GM12878 (cell line): ENCODE measurements at regions of chr12 and their contacts with region 1.

Region 1: GRCh38 chr12:108691175-108691997 is 39.9 kb downstream of the CORO1C start:
- DNase-seq: peak; percentile 63
- ATAC-seq: peak; percentile 90
- H3K4me3 ChIP-seq: peak overlapping the region; percentile 62; the same call in 1 of the 2 replicates
- H3K27ac ChIP-seq: peak overlapping the region; percentile 97
- H3K4me1 ChIP-seq: peaks cover 66% of the 10 kb centered on the region
- H3K27me3 ChIP-seq: no peaks in the 10 kb centered on the region
- CTCF ChIP-seq: peak in 2 of 3 experiments; percentile 24 to 37; a peak in 2 of 6 replicates
- EP300 ChIP-seq: 0 out of 4 replicates have a peak, but pooled peaks of 1 of the 2 experiments have one; percentile 29
- POLR2A ChIP-seq: peak; percentile 27; the same call in 1 of the 2 replicates
- RAD21 ChIP-seq: no peak

Region 2: GRCh38 chr12:108514468-108514972 is 176.9 kb before region 1 on chr12:
- CTCF ChIA-PET with region 1: no interaction called
- POLR2A ChIA-PET with region 1: no interaction called
- RAD21 ChIA-PET with region 1: no interaction called
- SMC1A ChIA-PET with region 1: no interaction called
- in situ Hi-C with region 1: no loop called
- intact Hi-C with region 1: no loop called
- DNase-seq: no peak
- ATAC-seq: peak; percentile 8
- H3K4me3 ChIP-seq: peak overlapping the region; percentile 66
- H3K27ac ChIP-seq: peak overlapping the region; percentile 34
- H3K4me1 ChIP-seq: peaks cover 23% of the 10 kb centered on the region
- H3K27me3 ChIP-seq: no peaks in the 10 kb centered on the region
- CTCF ChIP-seq: no peak
- EP300 ChIP-seq: no peak
- POLR2A ChIP-seq: no peak
- RAD21 ChIP-seq: no peak

Region 3: DNA sequence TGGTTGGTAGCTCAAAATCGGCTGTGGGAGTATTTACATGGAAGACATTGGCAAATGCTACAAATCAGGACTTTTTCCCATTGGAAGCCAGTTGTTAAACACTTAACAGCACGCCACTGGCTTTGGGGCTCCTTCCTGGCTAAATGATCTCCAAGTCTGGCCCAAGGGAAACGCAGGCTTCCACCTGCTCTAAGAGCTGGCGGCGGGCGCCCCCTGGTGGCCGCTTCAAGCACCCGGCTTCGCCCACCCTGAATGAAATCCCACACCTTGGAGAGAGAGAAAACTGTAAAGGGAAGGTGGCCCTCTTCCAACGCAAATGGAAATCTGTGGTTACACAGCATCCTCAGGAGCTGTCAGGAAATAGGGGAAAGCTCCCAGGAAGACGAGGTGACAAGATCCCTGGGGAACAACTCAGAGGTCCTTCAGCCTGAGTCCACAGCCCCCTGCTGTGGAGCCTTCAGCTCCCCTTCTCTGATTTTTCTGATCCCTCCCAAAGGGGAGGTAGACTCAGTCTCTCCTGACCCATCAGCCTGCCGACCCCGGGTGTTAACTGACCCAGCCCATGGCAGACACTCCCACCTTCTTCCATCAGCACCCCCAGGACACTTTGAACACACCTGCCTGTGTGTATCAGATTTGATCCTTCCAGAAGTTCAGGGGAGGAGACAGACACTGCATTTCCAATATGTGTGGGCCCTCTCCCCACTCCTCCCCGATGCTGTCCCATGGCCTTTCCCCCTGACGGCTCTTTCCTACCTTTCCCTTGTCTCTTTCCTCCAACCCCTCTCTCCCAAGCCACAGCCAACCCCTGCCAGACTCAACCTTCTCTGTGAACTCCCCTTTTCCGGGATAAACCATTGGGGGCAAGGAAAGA is 73.1 kb before region 1 on chr12:
- CTCF ChIA-PET with region 1: interaction called, 3 read pairs
- POLR2A ChIA-PET with region 1: no interaction called
- RAD21 ChIA-PET with region 1: interaction called, 11 read pairs
- SMC1A ChIA-PET with region 1: interaction called, 7 read pairs
- in situ Hi-C with region 1: no loop called
- intact Hi-C with region 1: no loop called
- DNase-seq: no peak
- ATAC-seq: peak; percentile 73
- H3K4me3 ChIP-seq: no peak overlapping the region
- H3K27ac ChIP-seq: peak overlapping the region; percentile 99
- H3K4me1 ChIP-seq: peaks cover 47% of the 10 kb centered on the region
- H3K27me3 ChIP-seq: no peaks in the 10 kb centered on the region
- CTCF ChIP-seq: peak; percentile 92 to 95 (median 94)
- EP300 ChIP-seq: no peak
- POLR2A ChIP-seq: no peak
- RAD21 ChIP-seq: peak; percentile 96

Region 4: GRCh38 chr12:108678104-108678730 is 13.2 kb before region 1 on chr12:
- CTCF ChIA-PET with region 1: interaction called, 8 read pairs
- POLR2A ChIA-PET with region 1: interaction called, 13 read pairs
- RAD21 ChIA-PET with region 1: interaction called, 4 read pairs
- SMC1A ChIA-PET with region 1: interaction called, 215 read pairs
- in situ Hi-C with region 1: no loop called
- intact Hi-C with region 1: no loop called
- DNase-seq: no peak
- ATAC-seq: peak; percentile 49
- H3K4me3 ChIP-seq: no peak overlapping the region
- H3K27ac ChIP-seq: no peak overlapping the region; the same call in 1 of the 2 replicates
- H3K4me1 ChIP-seq: peaks cover 9% of the 10 kb centered on the region
- H3K27me3 ChIP-seq: no peaks in the 10 kb centered on the region
- CTCF ChIP-seq: no peak
- EP300 ChIP-seq: no peak
- POLR2A ChIP-seq: no peak
- RAD21 ChIP-seq: no peak

Region 5: DNA sequence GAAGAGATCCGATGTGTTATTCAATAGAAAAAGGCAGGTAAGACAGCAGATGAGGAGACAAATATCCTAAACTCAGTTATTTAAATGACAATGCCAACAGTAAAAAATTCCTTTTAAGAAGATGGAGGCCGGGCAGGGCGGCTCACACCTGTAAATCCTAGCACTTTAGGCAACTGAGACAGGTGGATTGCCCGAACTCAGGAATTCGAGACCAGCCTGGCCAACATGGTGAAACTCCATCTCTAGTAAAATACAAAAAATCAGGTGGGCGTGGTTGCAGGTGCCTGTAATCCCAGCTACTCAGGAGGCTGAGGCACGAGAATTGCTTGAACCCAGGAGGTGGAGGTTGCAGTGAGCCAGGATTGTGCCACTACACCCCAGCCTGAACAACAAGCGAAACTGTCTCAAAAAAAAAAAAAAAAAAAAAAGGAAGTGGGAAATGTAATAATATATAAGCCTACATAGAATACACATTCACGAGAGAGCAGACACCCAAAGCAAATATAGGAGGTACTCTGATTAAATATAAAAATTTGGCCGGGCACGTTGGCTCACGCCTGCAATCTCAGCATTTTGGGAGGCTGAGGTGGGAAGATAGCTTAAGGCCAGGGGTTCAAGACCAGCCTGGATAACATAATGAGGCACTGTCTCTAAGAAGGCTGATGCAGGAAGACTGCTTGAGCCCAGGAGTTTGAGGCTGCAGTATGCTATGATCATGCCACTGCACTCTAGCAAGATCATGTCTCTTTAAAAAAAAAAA is 21.0 kb after region 1 on chr12:
- CTCF ChIA-PET with region 1: interaction called, 13 read pairs
- POLR2A ChIA-PET with region 1: interaction called, 8 read pairs
- RAD21 ChIA-PET with region 1: interaction called, 5 read pairs
- SMC1A ChIA-PET with region 1: interaction called, 83 read pairs
- in situ Hi-C with region 1: no loop called
- intact Hi-C with region 1: no loop called
- DNase-seq: no peak
- ATAC-seq: peak; percentile 80
- H3K4me3 ChIP-seq: no peak overlapping the region
- H3K27ac ChIP-seq: peak overlapping the region; percentile 20; the same call in 1 of the 2 replicates
- H3K4me1 ChIP-seq: peaks cover 36% of the 10 kb centered on the region
- H3K27me3 ChIP-seq: no peaks in the 10 kb centered on the region
- CTCF ChIP-seq: no peak
- EP300 ChIP-seq: no peak
- POLR2A ChIP-seq: no peak
- RAD21 ChIP-seq: no peak

Region 6: DNA sequence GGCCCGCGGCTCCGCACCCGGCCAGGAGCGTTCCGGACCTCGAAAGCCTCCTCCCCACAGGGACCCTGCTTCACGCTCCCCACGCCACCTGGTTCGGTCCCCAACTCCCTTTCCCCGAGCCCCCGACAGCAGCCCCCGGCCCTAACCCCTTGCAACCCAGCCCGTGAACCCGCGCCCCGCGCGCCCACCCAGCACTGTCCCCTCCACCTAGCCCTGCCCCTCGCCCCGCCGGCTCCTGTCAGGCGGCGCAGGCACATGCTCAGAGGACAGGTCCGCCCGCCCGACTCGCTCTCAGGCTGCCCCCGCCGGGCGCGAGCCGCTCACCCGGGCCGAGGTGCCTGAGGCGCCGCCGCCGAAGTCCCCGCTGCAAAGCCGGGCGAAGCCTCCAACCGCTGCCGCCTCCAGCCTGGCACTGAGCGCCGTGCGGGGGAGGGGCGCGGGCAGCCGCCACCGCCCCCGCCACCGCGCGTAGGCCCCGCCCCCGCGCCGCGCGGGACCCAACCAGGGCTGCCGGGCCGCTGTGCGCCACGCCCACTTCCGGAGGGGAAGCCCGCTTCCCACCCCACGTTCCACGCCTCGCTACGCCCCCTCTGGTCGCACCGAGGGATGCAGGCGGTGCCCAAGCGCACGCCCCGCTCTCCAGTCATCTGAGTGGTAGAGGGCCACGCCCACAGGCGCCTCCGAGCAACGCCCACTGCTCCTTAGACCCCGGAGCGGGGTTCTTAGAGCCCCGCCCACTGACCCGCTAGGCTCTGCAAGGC is 39.9 kb after region 1 on chr12 and contains the start of gene CORO1C:
- CTCF ChIA-PET with region 1: interaction called, 10 read pairs
- POLR2A ChIA-PET with region 1: interaction called, 10 read pairs
- RAD21 ChIA-PET with region 1: interaction called, 18 read pairs
- SMC1A ChIA-PET with region 1: interaction called, 10 read pairs
- in situ Hi-C with region 1: no loop called
- intact Hi-C with region 1: loop called (anchors 2 kb)
- DNase-seq: peak; percentile 90
- ATAC-seq: peak; percentile 80
- H3K4me3 ChIP-seq: peak within 1 kb of the TSS; percentile 88
- H3K27ac ChIP-seq: peak within 1 kb of the TSS; percentile 79
- H3K4me1 ChIP-seq: peaks cover 13% of the 10 kb centered on the region
- H3K27me3 ChIP-seq: no peaks in the 10 kb centered on the region
- CTCF ChIP-seq: peak; percentile 80 to 88 (median 86)
- EP300 ChIP-seq: no peak; a peak in 1 of 4 replicates
- POLR2A ChIP-seq: peak; percentile 86
- RAD21 ChIP-seq: peak; percentile 58
- polyA plus RNA-seq, gene CORO1C: 52.7 to 52.9 TPM

Region 7: GRCh38 chr12:109027767-109028166 is 336.4 kb after region 1 on chr12:
- CTCF ChIA-PET with region 1: no interaction called
- POLR2A ChIA-PET with region 1: no interaction called
- RAD21 ChIA-PET with region 1: no interaction called
- SMC1A ChIA-PET with region 1: no interaction called
- in situ Hi-C with region 1: no loop called
- intact Hi-C with region 1: no loop called
- DNase-seq: no peak
- ATAC-seq: no peak
- H3K4me3 ChIP-seq: no peak overlapping the region
- H3K27ac ChIP-seq: no peak overlapping the region
- H3K4me1 ChIP-seq: no peaks in the 10 kb centered on the region
- H3K27me3 ChIP-seq: no peaks in the 10 kb centered on the region; a peak in 1 of 4 replicates
- CTCF ChIP-seq: no peak
- EP300 ChIP-seq: no peak
- POLR2A ChIP-seq: no peak
- RAD21 ChIP-seq: no peak